Ascending aorta (tissue), 2 donors: ENCODE measurements at regions of chr1 and their contacts with region 1.

Region 1: DNA sequence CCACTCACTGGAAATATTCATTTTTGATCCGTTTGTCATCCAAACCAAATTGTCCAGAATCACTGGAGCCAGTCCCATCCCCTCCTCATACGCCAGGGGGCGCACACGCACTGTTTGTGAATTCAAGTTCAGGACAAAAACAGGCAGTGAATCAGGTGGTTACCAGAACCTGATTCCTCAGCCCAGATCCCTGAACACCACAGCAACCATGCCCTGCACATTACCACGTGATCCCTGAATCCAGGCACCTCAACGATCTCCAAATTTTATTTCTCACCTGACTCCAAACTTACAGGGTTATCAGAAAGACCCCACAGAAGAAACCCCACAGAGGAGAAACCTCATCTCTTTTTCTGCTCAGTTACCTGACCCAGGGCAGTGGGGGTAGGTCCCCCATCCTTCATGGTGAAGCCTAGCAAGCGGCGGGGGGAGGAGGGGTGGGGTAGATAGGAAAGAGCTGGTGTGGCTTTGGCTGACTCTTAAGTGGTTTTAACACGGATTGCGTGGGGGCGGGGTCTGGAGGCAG is 1.4 kb upstream of the PTPRF start:
- DNase-seq: peak in 1 of 2 donors; percentile 91
- H3K4me3 ChIP-seq: no peak overlapping the region
- H3K27ac ChIP-seq: no peak overlapping the region
- H3K4me1 ChIP-seq: peaks cover 3 to 9% of the 10 kb centered on the region in 2 donors
- H3K27me3 ChIP-seq: no peaks in the 10 kb centered on the region
- CTCF ChIP-seq: peak; percentile 90 to 91 (median 91)

Region 2: GRCh38 chr1:43466403-43466802 is 62.9 kb before region 1 on chr1:
- intact Hi-C with region 1: no loop called
- DNase-seq: no peak
- H3K4me3 ChIP-seq: no peak overlapping the region
- H3K27ac ChIP-seq: no peak overlapping the region
- H3K4me1 ChIP-seq: no peaks in the 10 kb centered on the region
- H3K27me3 ChIP-seq: no peaks in the 10 kb centered on the region
- CTCF ChIP-seq: no peak

Region 3: DNA sequence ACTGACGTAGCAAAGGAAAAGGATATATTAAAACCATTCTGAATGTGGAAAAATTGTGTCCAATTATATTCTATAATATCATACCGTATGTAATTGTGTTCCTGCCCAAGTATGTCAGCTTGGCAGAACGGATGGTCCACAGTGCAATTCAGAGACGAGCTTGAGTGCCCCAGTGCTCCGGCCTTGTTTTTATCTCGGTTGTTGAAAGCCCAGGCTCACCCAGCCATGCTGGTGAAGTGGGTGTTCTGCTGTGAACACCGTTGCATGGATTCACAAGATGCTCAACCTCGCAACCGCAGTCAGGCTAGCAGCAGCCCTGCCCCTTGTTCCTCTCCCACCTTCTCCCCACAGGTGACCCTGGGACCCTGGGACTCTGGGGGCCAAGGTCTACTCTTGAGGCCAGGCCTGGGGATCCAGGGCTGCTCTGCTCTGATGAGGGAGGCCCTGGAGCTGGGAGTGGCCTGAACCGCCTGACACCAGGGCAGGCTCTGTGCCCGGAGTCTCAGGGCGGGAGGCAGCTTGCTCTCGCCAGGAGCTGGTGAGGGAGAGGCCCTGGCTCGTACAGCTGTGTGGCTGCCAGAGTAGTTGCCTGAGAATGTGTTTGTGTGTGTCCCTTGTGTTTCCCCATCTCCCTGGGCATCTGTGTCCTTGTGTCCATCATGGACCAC is 12.6 kb after region 1 on chr1:
- intact Hi-C with region 1: loop called (anchors 1 kb)
- DNase-seq: peak; percentile 65 to 90
- H3K4me3 ChIP-seq: no peak overlapping the region
- H3K27ac ChIP-seq: peak overlapping the region; percentile 85 to 89
- H3K4me1 ChIP-seq: peaks cover 17 to 39% of the 10 kb centered on the region in 2 donors
- H3K27me3 ChIP-seq: no peaks in the 10 kb centered on the region
- CTCF ChIP-seq: no peak

Region 4: DNA sequence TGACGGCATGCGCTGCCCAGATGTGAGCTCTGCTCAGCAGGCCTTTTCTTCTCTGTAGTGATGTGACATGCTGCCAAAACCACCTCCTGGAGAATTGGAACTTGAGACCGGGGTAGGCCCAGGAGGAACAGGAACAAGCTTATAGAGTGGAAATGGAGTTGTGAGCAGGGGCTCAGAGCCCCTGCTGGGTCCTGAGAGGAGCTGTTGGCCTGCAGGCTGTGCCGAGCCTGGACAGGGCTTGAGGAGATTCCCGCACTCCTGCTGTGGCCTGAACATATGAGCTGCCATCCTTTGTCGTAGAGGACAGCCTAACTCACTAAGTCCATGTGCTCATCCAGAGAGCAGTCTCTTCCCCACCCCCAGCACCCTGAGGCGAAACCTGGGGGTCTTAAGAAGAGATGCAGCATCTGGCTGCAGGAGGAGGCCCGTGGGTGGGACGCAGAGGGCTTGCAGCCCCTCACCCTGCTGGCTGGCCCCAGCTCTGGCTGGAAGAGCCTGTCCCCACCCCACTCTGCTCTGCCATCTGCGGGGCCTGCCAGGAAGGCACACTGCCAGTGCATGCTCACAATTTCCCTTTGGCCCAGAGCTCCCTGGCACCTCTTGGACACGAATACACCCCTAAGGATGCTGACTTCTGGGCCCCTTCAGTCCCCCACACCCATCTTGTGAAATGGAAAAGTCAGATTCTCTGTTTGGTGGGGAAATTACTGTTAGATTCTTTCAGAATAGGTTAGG is 44.0 kb after region 1 on chr1:
- intact Hi-C with region 1: no loop called
- DNase-seq: no peak
- H3K4me3 ChIP-seq: no peak overlapping the region
- H3K27ac ChIP-seq: no peak overlapping the region
- H3K4me1 ChIP-seq: peaks cover 0 to 4% of the 10 kb centered on the region in 2 donors
- H3K27me3 ChIP-seq: no peaks in the 10 kb centered on the region
- CTCF ChIP-seq: no peak

Region 5: DNA sequence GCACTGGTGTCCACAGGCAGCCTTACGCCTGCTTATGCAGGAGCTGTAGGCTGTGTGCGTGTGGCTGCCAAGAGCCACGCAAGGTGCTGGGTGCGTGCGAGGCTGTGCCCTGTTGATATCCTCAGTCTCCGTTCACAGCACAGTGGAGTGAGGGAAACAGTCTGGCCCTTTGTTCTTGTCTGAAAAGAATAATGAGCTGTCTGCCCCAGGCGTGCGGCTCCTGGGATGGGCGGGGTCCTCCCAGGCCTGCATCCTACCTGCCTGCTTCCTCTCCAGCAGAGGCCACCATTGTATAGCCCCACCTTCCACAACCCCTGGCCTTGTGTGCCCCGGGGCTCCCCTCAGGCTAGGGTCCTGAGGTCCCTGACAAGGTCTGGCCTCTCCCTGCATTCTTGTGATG is 73.7 kb after region 1 on chr1:
- intact Hi-C with region 1: loop called (anchors 5 kb)
- DNase-seq: no peak
- H3K4me3 ChIP-seq: no peak overlapping the region
- H3K27ac ChIP-seq: no peak overlapping the region
- H3K4me1 ChIP-seq: no peaks in the 10 kb centered on the region
- H3K27me3 ChIP-seq: no peaks in the 10 kb centered on the region
- CTCF ChIP-seq: no peak

Region 6: GRCh38 chr1:43706598-43707495 is 177.6 kb after region 1 on chr1:
- intact Hi-C with region 1: loop called (anchors 5 kb)
- DNase-seq: peak; percentile 69 to 94
- H3K4me3 ChIP-seq: peak overlapping the region; percentile 96 to 97
- H3K27ac ChIP-seq: peak overlapping the region in 1 of 2 donors; percentile 70
- H3K4me1 ChIP-seq: peaks cover 0 to 9% of the 10 kb centered on the region in 2 donors
- H3K27me3 ChIP-seq: no peaks in the 10 kb centered on the region
- CTCF ChIP-seq: no peak

Region 7: DNA sequence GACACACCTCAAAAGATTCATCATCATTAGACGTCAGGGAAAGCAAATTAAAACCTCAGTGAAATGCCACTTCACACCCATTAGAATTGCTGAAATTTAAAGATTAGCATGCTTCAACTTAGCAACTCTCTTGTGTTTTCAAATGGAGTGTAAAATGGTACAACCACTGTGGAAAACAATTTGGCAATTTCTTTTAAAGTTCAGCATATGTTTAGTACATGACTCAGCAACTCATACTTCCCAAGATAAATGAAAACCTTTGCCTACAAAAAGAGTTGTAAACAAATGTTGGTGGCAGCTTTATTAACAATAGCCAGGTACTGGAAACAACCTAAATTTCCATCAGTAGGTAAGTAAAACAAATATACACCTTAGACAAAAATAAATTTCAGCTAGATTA is 220.8 kb after region 1 on chr1:
- intact Hi-C with region 1: no loop called
- DNase-seq: no peak
- H3K4me3 ChIP-seq: no peak overlapping the region
- H3K27ac ChIP-seq: no peak overlapping the region
- H3K4me1 ChIP-seq: no peaks in the 10 kb centered on the region
- H3K27me3 ChIP-seq: no peaks in the 10 kb centered on the region
- CTCF ChIP-seq: no peak

Region 8: DNA sequence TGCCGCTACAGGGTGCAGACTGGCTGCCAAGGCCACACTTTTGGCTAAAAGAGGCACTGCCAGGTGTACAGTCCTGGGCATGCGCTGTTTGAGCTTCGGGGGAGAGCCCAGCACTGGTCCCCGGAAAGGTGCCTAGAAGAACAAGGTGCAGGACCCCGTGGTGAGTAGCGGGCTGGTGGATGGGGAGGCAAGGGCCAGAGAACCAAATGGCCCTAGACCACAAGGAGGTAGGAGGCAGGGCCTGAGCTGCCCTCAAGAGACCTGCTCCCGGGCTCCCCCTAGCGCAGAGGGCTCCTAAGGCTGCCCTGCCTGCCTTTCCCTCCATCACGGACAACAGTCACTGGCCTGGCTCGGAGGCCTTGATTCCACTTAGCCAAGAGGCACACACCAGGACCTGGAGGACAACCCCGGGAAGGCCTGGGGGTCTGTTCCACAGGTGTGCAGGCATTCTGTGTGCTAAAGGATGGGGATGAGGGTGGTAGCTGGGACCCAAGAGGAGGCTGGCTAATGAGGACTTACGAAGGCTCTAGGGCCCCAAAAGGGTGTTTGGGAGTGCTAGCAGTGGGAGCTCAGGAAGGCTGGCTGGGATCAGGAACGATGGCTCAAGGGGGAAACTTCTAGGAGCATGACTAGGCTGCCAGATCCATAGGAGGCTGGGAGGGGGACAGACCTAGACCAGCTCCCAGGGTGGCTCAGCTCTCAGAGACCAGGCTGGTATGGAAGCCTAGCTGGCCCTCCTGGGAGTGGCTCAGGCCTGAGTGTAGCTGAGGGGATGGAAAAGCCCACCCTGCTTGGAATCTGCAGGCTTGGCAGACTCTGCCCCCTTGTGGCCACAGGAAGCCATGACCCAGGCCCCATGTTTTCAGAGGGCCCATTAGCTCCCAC is 405.1 kb after region 1 on chr1:
- intact Hi-C with region 1: loop called (anchors 5 kb)
- DNase-seq: peak in 1 of 2 donors; percentile 73
- H3K4me3 ChIP-seq: peak overlapping the region; percentile 55 to 62
- H3K27ac ChIP-seq: no peak overlapping the region
- H3K4me1 ChIP-seq: peaks cover 8 to 19% of the 10 kb centered on the region in 2 donors
- H3K27me3 ChIP-seq: peaks cover 7% of the 10 kb centered on the region
- CTCF ChIP-seq: peak; percentile 76 to 82 (median 79)

Region 9: DNA sequence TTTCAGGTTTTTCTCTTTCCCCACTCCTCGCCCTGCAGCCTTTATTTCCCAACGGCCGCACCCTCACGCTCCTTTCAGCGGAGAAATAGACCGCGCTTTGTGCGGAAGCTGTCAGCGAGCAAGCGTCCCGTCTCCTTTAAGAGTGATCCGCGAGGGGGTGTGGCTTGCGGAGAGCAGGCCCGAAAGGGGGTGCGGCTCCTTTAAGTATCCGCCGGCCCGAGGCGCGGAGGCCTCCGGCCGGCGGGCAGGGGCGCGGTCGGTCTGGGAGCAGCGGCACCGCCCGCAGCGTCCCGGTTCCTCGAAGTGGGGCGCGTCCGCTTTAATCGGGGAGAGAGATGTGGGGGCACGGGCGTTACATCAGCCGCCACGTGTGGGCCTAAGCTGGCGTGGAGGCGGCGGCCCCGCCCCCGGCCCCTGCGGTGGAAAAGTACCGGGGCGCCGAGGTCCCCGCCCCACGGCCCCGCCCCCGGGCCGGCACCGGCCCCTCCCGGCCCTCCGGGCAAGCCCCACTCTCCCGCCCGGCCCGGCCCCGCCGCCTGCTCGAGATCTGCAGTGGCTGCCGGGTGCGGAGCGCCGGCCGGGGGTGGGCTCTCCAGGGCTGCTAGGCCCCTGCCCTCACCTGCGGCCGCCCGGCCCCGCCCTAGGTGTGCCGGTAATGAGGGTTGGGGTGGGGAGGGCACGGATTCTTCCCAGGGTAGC is 500.8 kb after region 1 on chr1:
- intact Hi-C with region 1: loop called (anchors 10 kb)
- DNase-seq: peak; percentile 43 to 95
- H3K4me3 ChIP-seq: peak overlapping the region; percentile 75 to 76
- H3K27ac ChIP-seq: peak overlapping the region; percentile 75 to 93
- H3K4me1 ChIP-seq: peaks cover 0 to 12% of the 10 kb centered on the region in 2 donors
- H3K27me3 ChIP-seq: no peaks in the 10 kb centered on the region
- CTCF ChIP-seq: no peak